ENCODE measurements at regions of chr19 and their contacts with region 1.

Region 1: GRCh38 chr19:16143399-16144245 is at the start of gene HSH2D:
- DNase-seq: peak; percentile 86
- total RNA-seq, gene HSH2D: 0.81 to 1.1 TPM

Region 2: DNA sequence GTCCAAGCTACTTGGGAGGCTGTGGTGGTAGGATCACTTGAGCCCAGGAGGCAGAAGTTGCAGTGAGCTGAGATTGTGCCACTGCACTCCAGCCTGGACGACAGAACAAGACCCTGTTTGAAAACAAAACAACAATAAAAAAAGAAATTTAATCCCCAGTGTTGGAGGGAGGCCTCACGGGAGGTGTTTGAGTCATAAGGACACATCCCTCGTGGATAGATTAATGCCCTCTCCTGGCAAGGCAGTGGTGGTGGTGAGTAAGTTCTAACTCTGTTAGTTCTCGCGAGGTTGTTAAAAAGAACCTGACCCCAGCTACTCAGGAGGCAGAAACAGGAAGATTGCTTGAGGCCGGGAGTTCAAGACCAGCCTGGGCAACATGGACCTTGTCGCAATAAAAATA is 658.0 kb after region 1 on chr19:
- intact Hi-C with region 1: loop called in 1 of 2 experiments (anchors 5 kb)
- DNase-seq: no peak

Region 3: GRCh38 chr19:16829010-16829821 is 685.6 kb after region 1 on chr19 and contains the start of gene SIN3B:
- intact Hi-C with region 1: no loop called
- DNase-seq: peak; percentile 95
- total RNA-seq, gene SIN3B: 34.6 to 36.5 TPM